MCF 10A (cell line): ENCODE measurements at regions of chr2 and their contacts with region 1.

Region 1: DNA sequence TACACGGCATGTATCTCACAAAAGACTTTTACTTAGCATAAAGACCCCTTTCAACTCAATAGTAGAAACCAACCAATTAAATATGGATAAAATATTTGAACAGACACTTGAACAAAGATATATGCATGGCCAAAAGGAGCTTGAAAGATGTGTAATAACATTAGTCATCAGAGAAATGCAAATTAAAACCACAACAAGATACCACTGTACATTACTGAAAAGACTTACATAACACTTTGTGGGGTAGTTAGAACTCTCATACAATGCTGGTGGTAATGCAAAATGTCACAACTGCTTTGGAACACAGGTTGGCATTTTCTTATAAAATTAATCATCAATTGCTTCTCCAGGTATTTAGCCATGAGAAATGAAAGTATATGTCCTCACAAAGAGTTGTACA is 60.7 kb downstream of the TTC27 start:
- DNase-seq: peak; percentile 64
- H3K4me3 Mint-ChIP-seq: no peak overlapping the region
- H3K27ac Mint-ChIP-seq: no peak overlapping the region
- H3K4me1 Mint-ChIP-seq: peaks cover 4% of the 10 kb centered on the region
- H3K27me3 Mint-ChIP-seq: no peaks in the 10 kb centered on the region
- CTCF ChIP-seq: no peak

Region 2: DNA sequence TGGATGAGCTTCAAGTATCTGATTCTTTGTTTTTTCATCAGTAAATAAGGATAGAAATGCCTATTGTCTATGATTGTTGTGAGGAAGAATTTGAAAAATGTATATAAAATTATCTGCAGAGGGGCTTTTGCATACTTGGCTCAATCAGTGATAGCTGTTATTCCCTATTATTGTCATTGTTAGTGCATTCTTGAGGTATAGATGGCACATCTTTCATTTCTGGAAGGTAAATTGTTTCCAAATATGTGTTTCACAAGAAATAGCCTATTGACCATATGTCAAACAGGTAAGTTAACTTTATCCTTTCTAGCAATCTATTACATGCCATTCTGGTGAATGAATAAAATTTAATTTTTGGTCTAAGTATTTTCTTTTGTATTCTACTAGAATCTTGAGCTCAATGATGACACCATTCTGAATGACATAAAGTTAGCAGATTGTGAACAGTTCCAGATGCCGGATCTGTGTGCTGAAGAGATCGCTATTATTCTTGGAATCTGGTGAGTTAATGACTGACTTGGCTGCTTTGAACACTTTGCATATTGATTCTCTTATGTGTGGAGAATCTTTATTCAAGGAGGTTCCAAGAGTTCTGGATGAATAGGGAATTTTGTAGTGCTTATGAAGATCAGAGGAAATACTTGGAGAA is 16.5 kb before region 1 on chr2:
- CTCF ChIA-PET with region 1: no interaction called
- POLR2A ChIA-PET with region 1: no interaction called
- intact Hi-C with region 1: no loop called
- DNase-seq: no peak
- H3K4me3 Mint-ChIP-seq: no peak overlapping the region
- H3K27ac Mint-ChIP-seq: no peak overlapping the region
- H3K4me1 Mint-ChIP-seq: no peaks in the 10 kb centered on the region
- H3K27me3 Mint-ChIP-seq: no peaks in the 10 kb centered on the region
- CTCF ChIP-seq: no peak

Region 3: DNA sequence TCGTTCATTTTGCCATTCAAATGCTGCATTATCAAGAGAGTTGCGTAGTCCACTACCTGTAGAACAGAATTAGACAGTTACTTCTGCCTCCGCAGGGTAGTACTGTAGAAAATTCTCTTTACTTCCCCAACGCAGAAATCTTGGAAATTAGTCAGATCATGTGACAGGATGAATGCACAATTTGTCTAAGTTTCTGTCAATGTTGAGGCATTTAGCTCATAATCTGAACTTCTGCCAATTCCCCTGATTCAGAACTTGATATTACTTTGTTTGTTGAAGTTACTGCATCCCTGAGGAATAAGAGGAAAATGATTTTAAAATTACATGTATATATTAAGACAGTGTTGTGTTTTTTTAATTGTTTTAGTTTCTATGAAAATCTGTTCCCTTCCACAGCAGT is 22.7 kb after region 1 on chr2:
- CTCF ChIA-PET with region 1: interaction called, 6 read pairs
- POLR2A ChIA-PET with region 1: interaction called, 10 read pairs
- intact Hi-C with region 1: no loop called
- DNase-seq: peak; percentile 68
- H3K4me3 Mint-ChIP-seq: no peak overlapping the region
- H3K27ac Mint-ChIP-seq: no peak overlapping the region
- H3K4me1 Mint-ChIP-seq: peaks cover 21% of the 10 kb centered on the region
- H3K27me3 Mint-ChIP-seq: no peaks in the 10 kb centered on the region
- CTCF ChIP-seq: no peak